ENCODE measurements at regions of chr17 and their contacts with region 1.

Region 1: GRCh38 chr17:65556014-65556909 is 5.2 kb downstream of the AXIN2 start:
- DNase-seq: peak; percentile 82 to 96 (median 88)
- ATAC-seq: peak; percentile 66
- H3K4me3 ChIP-seq: peak overlapping the region; percentile 48
- H3K4me3 Mint-ChIP-seq: peak overlapping the region in 1 of 10 donors; percentile 41
- H3K27ac ChIP-seq: no peak overlapping the region
- H3K27ac Mint-ChIP-seq: no peak overlapping the region
- H3K4me1 ChIP-seq: peaks cover 19 to 38% of the 10 kb centered on the region in 2 donors
- H3K4me1 Mint-ChIP-seq: peaks cover 0 to 29% (median 21%) of the 10 kb centered on the region in 7 donors
- H3K27me3 ChIP-seq: no peaks in the 10 kb centered on the region
- H3K27me3 Mint-ChIP-seq: peaks cover 0 to 15% (median 0%) of the 10 kb centered on the region in 5 donors

Region 2: DNA sequence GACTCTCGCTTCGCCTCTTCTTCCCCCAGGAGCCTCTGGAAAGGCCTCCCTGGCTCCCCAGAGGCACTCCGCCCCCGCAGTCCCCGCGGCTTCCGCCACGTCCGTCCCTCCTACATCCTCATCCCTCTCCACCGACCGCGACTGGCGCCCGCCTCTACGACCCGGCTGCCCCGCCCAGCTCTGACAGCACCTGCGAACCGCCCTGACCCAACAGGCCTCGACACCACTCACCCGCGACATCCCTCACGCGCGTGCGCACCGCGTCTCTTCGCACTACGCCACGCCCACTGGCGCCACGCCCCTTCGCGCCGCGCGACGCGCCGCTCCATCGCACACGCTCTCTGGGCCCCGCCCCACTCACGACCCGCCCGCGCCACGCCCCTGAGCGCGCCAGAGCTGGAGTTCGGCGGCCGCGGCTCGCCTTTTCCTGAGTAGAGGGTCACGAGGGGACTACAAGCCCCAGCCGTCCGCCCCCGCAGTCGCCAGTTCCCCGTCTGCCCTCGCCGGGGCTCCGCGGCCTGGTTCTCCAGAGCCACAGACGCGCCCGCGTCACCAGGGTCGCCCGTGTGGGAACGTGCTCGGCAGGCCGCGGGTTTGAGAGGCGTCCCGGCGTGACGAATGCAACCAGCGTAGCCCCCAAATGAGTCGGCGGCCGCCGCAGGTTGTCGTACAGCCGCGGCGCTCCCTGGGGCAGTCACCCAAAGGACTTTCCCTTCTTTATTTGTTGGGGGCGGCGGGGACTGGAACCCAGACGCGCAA is 580.8 kb before region 1 on chr17:
- CTCF ChIA-PET with region 1: no interaction called
- POLR2A ChIA-PET with region 1: no interaction called
- intact Hi-C with region 1: loop called in 1 of 2 experiments (anchors 5 kb)
- DNase-seq: peak; percentile 94 to 99 (median 98)
- ATAC-seq: peak; percentile 92
- H3K4me3 ChIP-seq: peak overlapping the region; percentile 82
- H3K4me3 Mint-ChIP-seq: peak overlapping the region; percentile 88 to 100 (median 96)
- H3K27ac ChIP-seq: peak overlapping the region; percentile 99
- H3K27ac Mint-ChIP-seq: peak overlapping the region; percentile 96 to 100 (median 99)
- H3K4me1 ChIP-seq: peaks cover 8 to 27% of the 10 kb centered on the region in 2 donors
- H3K4me1 Mint-ChIP-seq: peaks cover 19 to 50% (median 33%) of the 10 kb centered on the region in 7 donors
- H3K27me3 ChIP-seq: no peaks in the 10 kb centered on the region
- H3K27me3 Mint-ChIP-seq: no peaks in the 10 kb centered on the region

Region 3: GRCh38 chr17:65345261-65346005 is 210.8 kb before region 1 on chr17:
- CTCF ChIA-PET with region 1: no interaction called
- POLR2A ChIA-PET with region 1: no interaction called
- intact Hi-C with region 1: loop called in 1 of 2 experiments (anchors 2 kb)
- DNase-seq: peak in 5 of 9 donors; percentile 29 to 40 (median 36)
- ATAC-seq: no peak
- H3K4me3 ChIP-seq: no peak overlapping the region
- H3K4me3 Mint-ChIP-seq: peak overlapping the region in 9 of 10 donors; percentile 7 to 63 (median 48)
- H3K27ac ChIP-seq: peak overlapping the region; percentile 12
- H3K27ac Mint-ChIP-seq: peak overlapping the region in 8 of 9 donors; percentile 28 to 93 (median 78)
- H3K4me1 ChIP-seq: peaks cover 0 to 7% of the 10 kb centered on the region in 2 donors
- H3K4me1 Mint-ChIP-seq: peaks cover 0 to 24% (median 12%) of the 10 kb centered on the region in 7 donors
- H3K27me3 ChIP-seq: no peaks in the 10 kb centered on the region
- H3K27me3 Mint-ChIP-seq: peaks cover 1 to 12% (median 5%) of the 10 kb centered on the region in 5 donors

Region 4: DNA sequence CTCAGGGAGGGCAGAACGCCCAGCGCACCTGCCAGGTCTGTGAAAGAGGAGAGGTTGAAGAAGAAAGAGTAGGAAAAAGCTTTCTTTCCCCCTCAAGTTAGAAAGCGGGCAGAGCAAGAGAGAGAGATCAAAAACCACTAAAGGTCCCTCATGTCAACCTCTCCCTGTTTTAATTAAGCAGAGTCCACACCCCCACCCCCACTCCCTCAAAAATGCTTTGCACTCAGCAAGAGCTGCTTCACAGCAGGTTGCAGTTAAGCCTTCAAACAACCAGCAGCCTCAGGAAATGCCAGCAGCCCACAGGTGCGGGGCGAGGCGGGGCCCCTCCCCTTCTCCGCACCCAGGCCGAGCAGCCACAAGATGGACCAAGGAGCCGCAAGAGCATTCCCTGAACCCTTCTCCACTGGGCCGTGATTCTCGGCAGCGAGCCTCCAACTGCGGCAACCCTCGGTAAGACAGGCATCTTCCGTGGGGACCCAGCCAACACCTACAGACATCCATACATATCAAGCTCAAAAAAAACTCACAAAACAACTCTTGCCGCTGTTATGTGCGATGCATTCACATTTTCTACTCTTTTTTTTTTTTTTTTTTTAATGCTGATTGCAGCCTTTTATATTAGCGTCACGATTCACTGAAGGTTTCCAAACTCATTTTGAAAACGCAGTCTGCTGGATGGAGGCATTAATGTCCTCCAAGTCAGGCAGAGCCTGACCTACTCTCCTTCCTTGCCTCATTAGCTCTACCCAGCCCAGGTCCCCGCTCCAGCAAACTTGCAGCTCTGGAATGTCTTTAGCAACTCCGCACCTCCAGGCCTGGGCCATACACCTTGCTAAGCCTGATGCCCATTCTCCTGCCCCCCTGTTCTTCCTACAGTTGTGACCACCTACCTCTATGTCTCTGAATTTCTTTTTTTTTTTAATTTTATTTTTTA is 60.9 kb before region 1 on chr17:
- CTCF ChIA-PET with region 1: no interaction called
- POLR2A ChIA-PET with region 1: no interaction called
- intact Hi-C with region 1: loop called in 1 of 2 experiments (anchors 2 kb)
- DNase-seq: peak in 6 of 9 donors; percentile 4 to 45 (median 38)
- ATAC-seq: peak; percentile 50
- H3K4me3 ChIP-seq: peak overlapping the region; percentile 29
- H3K4me3 Mint-ChIP-seq: peak overlapping the region; percentile 41 to 85 (median 78)
- H3K27ac ChIP-seq: no peak overlapping the region
- H3K27ac Mint-ChIP-seq: peak overlapping the region in 5 of 9 donors; percentile 15 to 87 (median 63)
- H3K4me1 ChIP-seq: peaks cover 0 to 4% of the 10 kb centered on the region in 2 donors
- H3K4me1 Mint-ChIP-seq: peaks cover 12 to 27% (median 17%) of the 10 kb centered on the region in 7 donors
- H3K27me3 ChIP-seq: no peaks in the 10 kb centered on the region
- H3K27me3 Mint-ChIP-seq: peaks cover 0 to 26% (median 0%) of the 10 kb centered on the region in 5 donors

Region 5: DNA sequence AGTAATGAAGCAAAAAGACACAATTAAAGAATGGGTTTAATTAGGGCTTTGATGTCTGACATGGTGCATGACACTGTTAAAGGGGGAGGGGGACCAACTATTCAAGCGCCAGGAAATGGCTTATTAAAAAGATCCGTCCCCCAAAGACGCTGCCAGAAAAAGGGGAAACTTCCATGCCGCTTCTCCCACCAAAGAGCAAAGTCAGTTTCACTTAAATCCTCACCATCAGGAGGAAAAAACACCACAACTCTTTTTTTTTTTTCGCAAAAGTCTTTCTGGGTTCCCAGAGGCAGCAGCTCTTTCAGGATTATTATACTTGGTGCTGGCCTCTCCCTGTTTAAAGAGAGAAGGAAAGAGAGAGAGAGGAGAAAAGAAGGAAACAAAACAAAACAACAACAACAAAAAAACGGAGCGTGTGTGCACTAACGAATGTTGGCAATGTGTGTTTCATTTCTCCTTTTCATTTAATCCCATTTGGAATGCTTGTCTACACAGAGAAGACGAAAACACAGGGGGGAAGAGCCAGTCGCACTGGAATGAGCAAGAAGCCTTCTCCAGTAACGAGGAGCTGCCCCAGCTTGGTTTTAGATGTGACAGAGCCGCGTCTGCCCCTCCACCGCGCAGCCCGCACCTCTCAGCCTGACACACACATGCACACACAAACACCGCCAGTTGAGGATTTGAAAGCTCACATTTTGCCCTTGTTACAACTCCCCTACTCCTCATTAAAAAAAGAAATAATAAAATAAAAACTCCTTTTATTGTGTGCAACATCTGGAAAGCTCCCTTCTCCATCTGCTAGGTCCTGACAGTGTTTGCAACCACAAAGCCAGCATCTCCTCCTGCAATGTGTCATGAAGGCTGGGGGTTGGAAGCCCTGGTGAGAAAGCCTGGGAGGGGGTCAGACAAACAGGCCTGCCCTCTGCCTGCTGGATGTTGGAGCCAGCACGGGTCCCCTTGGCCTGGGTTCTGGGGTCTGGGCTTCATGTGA is 37.9 kb after region 1 on chr17:
- CTCF ChIA-PET with region 1: no interaction called
- POLR2A ChIA-PET with region 1: interaction called, 10 read pairs
- intact Hi-C with region 1: loop called in 1 of 2 experiments (anchors 2 kb)
- DNase-seq: peak in 3 of 9 donors; percentile 19 to 26 (median 23)
- ATAC-seq: peak; percentile 44
- H3K4me3 ChIP-seq: peak overlapping the region; percentile 27
- H3K4me3 Mint-ChIP-seq: peak overlapping the region; percentile 78 to 91 (median 86)
- H3K27ac ChIP-seq: no peak overlapping the region
- H3K27ac Mint-ChIP-seq: peak overlapping the region in 7 of 9 donors; percentile 25 to 76 (median 57)
- H3K4me1 ChIP-seq: peaks cover 0 to 22% of the 10 kb centered on the region in 2 donors
- H3K4me1 Mint-ChIP-seq: peaks cover 12 to 51% (median 30%) of the 10 kb centered on the region in 7 donors
- H3K27me3 ChIP-seq: no peaks in the 10 kb centered on the region
- H3K27me3 Mint-ChIP-seq: peaks cover 0 to 10% (median 0%) of the 10 kb centered on the region in 5 donors

Region 6: DNA sequence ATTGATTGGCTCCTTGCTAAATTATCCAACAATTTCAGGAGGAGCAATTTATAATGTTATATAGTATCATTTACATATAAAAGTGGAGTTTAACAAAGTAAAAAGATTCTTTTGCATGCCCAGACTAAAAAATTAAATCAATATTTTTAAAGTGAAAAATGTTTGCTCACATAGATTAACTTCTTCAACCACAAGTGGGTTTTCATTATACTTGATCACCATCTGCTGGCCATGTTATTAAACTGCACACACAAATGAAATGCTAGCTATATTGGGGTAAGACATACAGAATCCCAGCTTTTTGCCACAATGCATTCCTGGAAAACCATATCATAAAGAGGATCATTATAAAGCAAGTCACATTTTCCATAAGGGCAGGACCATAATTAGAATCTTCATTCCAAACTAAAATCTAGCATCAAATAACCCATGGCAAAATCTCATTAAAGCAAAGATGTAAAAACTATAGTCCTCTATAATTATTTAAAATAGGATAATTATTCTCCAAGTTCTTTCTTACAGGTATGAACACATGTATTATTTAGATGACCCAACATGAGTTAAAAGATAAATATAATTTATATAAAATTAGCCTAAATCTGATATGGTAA is 609.4 kb after region 1 on chr17:
- CTCF ChIA-PET with region 1: no interaction called
- POLR2A ChIA-PET with region 1: no interaction called
- intact Hi-C with region 1: loop called (anchors 2 kb)
- DNase-seq: peak in 7 of 9 donors; percentile 23 to 58 (median 53)
- ATAC-seq: peak; percentile 57
- H3K4me3 ChIP-seq: no peak overlapping the region
- H3K4me3 Mint-ChIP-seq: no peak overlapping the region
- H3K27ac ChIP-seq: no peak overlapping the region
- H3K27ac Mint-ChIP-seq: no peak overlapping the region
- H3K4me1 ChIP-seq: no peaks in the 10 kb centered on the region
- H3K4me1 Mint-ChIP-seq: no peaks in the 10 kb centered on the region
- H3K27me3 ChIP-seq: no peaks in the 10 kb centered on the region
- H3K27me3 Mint-ChIP-seq: no peaks in the 10 kb centered on the region

Measured in naive thymus-derived CD4-positive, alpha-beta T cell (primary cell).